ENCODE measurements at regions of chr6 and their contacts with region 1.

Region 1: DNA sequence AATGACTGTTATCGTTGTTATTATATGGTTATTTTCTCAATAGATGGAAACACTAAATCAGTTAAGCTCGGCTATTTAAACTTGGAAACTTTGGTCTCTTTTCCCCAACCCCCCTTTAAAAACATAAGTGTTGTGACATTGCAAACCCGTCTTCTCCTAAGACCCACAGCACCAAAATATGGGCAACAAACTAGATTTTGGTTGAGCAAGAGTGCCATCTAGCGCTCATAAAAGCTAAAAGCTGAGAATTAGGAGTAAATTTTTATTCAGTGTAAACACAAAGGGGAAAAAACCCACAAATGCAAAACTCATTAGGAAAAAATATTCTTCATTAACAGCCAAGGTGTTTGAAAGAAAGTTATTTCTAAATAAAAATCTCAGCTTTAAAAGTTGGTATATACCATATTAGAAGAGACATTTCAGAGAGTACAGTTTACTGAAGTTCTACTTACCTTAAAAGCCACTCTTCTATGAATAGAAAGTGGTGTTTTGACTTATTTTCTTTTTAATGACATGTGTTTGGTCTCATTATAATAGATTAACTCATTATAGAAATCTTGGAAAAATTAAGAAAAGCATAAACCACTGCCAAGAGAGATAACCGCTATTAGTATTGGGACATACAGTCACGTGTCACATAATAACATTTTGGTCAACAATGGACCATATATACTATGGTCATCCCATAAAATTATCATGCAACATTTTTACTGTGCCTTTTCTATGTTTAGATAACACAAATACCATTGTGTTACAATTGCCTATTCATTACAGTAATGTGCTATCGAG is 21.1 kb downstream of the SESN1 start:
- DNase-seq: peak; percentile 74
- ATAC-seq: peak; percentile 68
- H3K4me3 Mint-ChIP-seq: no peak overlapping the region
- H3K27ac Mint-ChIP-seq: no peak overlapping the region
- H3K4me1 Mint-ChIP-seq: peaks cover 27% of the 10 kb centered on the region
- H3K27me3 Mint-ChIP-seq: no peaks in the 10 kb centered on the region

Region 2: GRCh38 chr6:108835218-108835850 is 238.2 kb before region 1 on chr6:
- CTCF ChIA-PET with region 1: interaction called, 20 read pairs
- POLR2A ChIA-PET with region 1: no interaction called
- DNase-seq: peak; percentile 91
- ATAC-seq: peak; percentile 96
- H3K4me3 Mint-ChIP-seq: no peak overlapping the region
- H3K27ac Mint-ChIP-seq: no peak overlapping the region
- H3K4me1 Mint-ChIP-seq: peaks cover 45% of the 10 kb centered on the region
- H3K27me3 Mint-ChIP-seq: peaks cover 14% of the 10 kb centered on the region

Region 3: GRCh38 chr6:108914235-108915022 is 159.1 kb before region 1 on chr6:
- CTCF ChIA-PET with region 1: interaction called, 58 read pairs
- POLR2A ChIA-PET with region 1: no interaction called
- DNase-seq: peak; percentile 54
- ATAC-seq: no peak
- H3K4me3 Mint-ChIP-seq: no peak overlapping the region
- H3K27ac Mint-ChIP-seq: no peak overlapping the region
- H3K4me1 Mint-ChIP-seq: peaks cover 16% of the 10 kb centered on the region
- H3K27me3 Mint-ChIP-seq: peaks cover 26% of the 10 kb centered on the region

Region 4: GRCh38 chr6:109009236-109009961 is 64.1 kb before region 1 on chr6:
- CTCF ChIA-PET with region 1: interaction called, 31 read pairs
- POLR2A ChIA-PET with region 1: interaction called, 3 read pairs
- DNase-seq: peak; percentile 93
- ATAC-seq: peak; percentile 96
- H3K4me3 Mint-ChIP-seq: peak overlapping the region; percentile 92
- H3K27ac Mint-ChIP-seq: peak overlapping the region; percentile 95
- H3K4me1 Mint-ChIP-seq: peaks cover 42% of the 10 kb centered on the region
- H3K27me3 Mint-ChIP-seq: no peaks in the 10 kb centered on the region

Region 5: DNA sequence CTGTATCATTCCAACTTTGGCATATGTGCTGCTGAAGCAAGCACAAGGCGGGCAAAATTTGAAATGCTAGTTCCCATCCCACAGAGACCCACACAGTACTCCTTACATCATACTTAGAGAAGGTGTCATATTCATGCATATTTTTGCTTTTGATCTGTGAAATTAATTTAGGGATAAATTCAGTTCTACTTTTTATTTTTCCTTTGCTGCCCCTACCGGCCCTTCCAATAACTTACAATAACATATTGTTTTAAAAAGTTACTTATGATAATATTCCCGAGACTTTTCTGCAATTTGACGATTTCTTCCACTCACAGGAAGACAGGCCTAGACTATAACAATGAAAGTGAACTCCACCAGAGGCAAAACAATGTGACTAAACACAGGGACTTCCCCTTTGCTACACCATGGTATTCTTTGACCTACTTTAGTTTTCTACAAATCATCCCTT is 13.9 kb before region 1 on chr6:
- CTCF ChIA-PET with region 1: interaction called, 22 read pairs
- POLR2A ChIA-PET with region 1: interaction called, 3 read pairs
- DNase-seq: no peak
- ATAC-seq: peak; percentile 79
- H3K4me3 Mint-ChIP-seq: peak overlapping the region; percentile 1
- H3K27ac Mint-ChIP-seq: peak overlapping the region; percentile 54
- H3K4me1 Mint-ChIP-seq: peaks cover 33% of the 10 kb centered on the region
- H3K27me3 Mint-ChIP-seq: no peaks in the 10 kb centered on the region

Region 6: DNA sequence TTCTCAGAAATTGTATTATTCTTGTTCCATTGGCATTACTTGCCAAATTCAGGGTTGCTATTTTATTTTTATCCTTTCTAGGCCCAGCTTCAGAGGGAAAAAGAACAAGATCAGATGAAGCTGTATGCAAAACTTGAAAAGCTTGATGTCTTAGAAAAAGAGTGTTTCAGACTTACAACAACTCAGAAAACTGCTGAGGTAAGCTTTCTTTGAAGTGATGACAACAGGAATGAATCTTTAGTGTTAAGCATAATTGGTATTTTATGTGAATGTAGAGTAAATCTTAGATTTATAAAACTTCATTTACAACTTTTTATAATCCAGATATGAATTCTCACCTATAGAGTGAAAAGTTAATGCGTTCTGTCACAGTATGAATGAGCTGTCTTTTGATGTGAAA is 80.2 kb after region 1 on chr6:
- CTCF ChIA-PET with region 1: no interaction called
- POLR2A ChIA-PET with region 1: no interaction called
- DNase-seq: no peak
- ATAC-seq: no peak
- H3K4me3 Mint-ChIP-seq: no peak overlapping the region
- H3K27ac Mint-ChIP-seq: no peak overlapping the region
- H3K4me1 Mint-ChIP-seq: no peaks in the 10 kb centered on the region
- H3K27me3 Mint-ChIP-seq: no peaks in the 10 kb centered on the region

Measured in activated CD8-positive, alpha-beta T cell treated with anti-CD3 and anti-CD28 coated beads, Interleukin-2, amount 10 ng/mL, durations not matched to agents 7 days and 5 days (primary cell).